ENCODE measurements at regions of chr6 and their contacts with region 1.

Region 1: GRCh38 chr6:15245361-15246216 is at the start of gene JARID2:
- DNase-seq: peak; percentile 94 to 98 (median 95)
- H3K4me3 ChIP-seq: peak within 1 kb of the TSS; percentile 75 to 96
- H3K4me3 Mint-ChIP-seq: peak within 1 kb of the TSS; percentile 98 to 100 (median 99)
- H3K27ac ChIP-seq: peak within 1 kb of the TSS; percentile 90
- H3K27ac Mint-ChIP-seq: peak within 1 kb of the TSS; percentile 96 to 99 (median 98)
- H3K4me1 ChIP-seq: peaks cover 32% of the 10 kb centered on the region
- H3K4me1 Mint-ChIP-seq: peaks cover 19 to 49% (median 29%) of the 10 kb centered on the region in 4 donors
- H3K27me3 ChIP-seq: no peaks in the 10 kb centered on the region
- H3K27me3 Mint-ChIP-seq: peaks cover 0 to 5% of the 10 kb centered on the region in 2 donors
- total RNA-seq, gene JARID2: 20.2 to 21.6 TPM

Region 2: DNA sequence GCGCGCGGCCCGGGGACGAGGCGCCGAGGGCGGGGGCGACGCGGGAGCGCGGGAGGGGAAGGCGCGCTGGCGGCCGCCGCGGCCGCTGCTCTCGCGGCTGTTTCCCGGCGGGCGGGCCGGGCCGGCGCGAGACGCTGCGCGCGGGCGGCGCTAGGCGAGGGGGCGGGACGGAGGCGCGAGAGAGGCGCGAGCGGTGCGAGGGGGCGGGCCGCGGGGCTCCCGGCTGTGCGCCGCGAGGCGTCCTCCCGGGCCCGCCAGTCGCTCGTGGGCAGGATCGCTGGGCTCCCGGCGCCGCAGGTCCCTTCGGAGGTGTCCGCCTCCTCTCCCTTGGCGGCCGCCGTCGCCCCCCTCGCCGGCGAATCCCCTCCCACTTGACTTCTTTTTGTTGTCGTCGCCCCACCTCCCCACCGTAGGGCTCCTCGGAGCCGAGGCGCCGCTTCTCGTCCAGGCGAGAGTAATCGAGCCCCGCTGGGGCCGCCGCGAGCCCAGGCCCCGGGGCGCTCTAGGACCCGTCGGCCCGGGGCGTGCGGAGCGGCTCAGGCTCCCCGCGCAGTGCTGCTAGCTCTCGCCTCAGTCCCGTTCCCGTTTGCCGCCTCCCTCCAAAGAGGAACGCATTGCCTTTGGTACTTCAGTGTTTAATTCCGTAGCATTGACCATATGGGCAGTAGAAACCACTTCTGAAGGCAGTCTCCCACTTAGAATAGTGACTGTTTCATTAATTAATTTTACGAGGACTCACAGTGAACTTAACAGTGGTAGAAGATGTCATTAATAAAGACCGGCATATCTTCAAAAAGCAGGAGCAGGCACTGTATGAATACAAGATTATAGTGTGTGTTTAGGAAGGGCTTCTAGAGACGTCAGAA is 1533.6 kb before region 1 on chr6 and contains the start of gene RANBP9:
- CTCF ChIA-PET with region 1: no interaction called
- POLR2A ChIA-PET with region 1: no interaction called
- intact Hi-C with region 1: loop called (anchors 5 kb)
- DNase-seq: peak; percentile 89 to 92 (median 91)
- H3K4me3 ChIP-seq: peak within 1 kb of the TSS; percentile 69 to 74
- H3K4me3 Mint-ChIP-seq: peak within 1 kb of the TSS; percentile 95 to 99 (median 96)
- H3K27ac ChIP-seq: peak within 1 kb of the TSS; percentile 87
- H3K27ac Mint-ChIP-seq: peak within 1 kb of the TSS; percentile 98 to 99 (median 99)
- H3K4me1 ChIP-seq: peaks cover 50% of the 10 kb centered on the region
- H3K4me1 Mint-ChIP-seq: peaks cover 28 to 73% (median 44%) of the 10 kb centered on the region in 4 donors
- H3K27me3 ChIP-seq: no peaks in the 10 kb centered on the region
- H3K27me3 Mint-ChIP-seq: no peaks in the 10 kb centered on the region
- total RNA-seq, gene RANBP9: 51.1 to 52.9 TPM

Region 3: GRCh38 chr6:14210663-14211561 is 1034.7 kb before region 1 on chr6:
- CTCF ChIA-PET with region 1: interaction called, 3 read pairs
- POLR2A ChIA-PET with region 1: no interaction called
- intact Hi-C with region 1: loop called (anchors 1 kb)
- DNase-seq: peak; percentile 87 to 93 (median 90)
- H3K4me3 ChIP-seq: peak overlapping the region; percentile 71 to 90
- H3K4me3 Mint-ChIP-seq: peak overlapping the region; percentile 86 to 92 (median 89)
- H3K27ac ChIP-seq: peak overlapping the region; percentile 45
- H3K27ac Mint-ChIP-seq: peak overlapping the region; percentile 22 to 86 (median 77)
- H3K4me1 ChIP-seq: peaks cover 9% of the 10 kb centered on the region
- H3K4me1 Mint-ChIP-seq: peaks cover 6 to 22% (median 13%) of the 10 kb centered on the region in 4 donors
- H3K27me3 ChIP-seq: no peaks in the 10 kb centered on the region
- H3K27me3 Mint-ChIP-seq: no peaks in the 10 kb centered on the region

Region 4: DNA sequence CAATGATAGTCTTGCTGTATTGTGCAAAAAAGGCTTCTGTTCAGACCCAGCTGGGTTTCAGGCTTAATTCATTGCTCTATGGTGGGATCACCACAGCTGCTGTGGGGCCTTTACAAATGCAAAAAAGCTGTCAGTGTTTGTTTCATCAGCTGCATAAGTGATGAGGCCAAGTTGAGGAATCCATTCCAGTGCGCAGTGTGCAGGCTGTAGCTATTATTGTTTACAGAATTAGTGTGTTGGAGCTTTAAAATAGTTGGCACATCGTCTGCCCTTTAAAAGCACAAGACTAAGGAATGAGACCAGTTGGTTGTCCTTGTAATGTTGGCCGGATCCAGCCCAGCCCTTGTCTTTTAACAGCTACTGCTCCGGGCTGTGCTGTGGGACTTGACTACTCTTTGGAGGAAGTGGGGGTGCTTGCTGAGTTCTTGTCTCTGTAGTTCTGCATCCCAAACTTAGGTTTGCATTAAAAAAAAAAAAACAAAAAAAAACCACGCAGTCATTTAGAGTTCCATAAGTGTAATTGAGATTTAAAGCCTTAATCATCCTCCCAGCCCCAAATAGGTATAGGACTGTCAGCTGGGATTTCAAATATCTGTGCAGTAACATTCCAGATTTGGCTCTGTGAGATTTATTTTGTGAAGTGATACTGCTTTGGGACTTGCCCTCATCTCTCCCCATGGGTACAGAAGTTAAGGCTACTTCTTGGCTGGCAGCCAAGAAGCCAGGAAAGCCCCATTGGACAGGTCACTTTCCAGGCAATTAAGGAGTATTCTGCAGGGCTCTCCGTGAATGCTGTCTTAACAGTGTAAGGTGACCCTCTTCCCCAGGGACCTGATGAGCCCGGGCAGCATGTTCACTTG is 19.5 kb after region 1 on chr6:
- CTCF ChIA-PET with region 1: interaction called, 3 read pairs
- POLR2A ChIA-PET with region 1: interaction called, 11 read pairs
- intact Hi-C with region 1: no loop called
- DNase-seq: no peak
- H3K4me3 ChIP-seq: no peak overlapping the region
- H3K4me3 Mint-ChIP-seq: peak overlapping the region in 6 of 8 donors; percentile 19 to 86 (median 66)
- H3K27ac ChIP-seq: no peak overlapping the region
- H3K27ac Mint-ChIP-seq: peak overlapping the region in 2 of 7 donors; percentile 8 to 75
- H3K4me1 ChIP-seq: peaks cover 74% of the 10 kb centered on the region
- H3K4me1 Mint-ChIP-seq: peaks cover 50 to 96% (median 78%) of the 10 kb centered on the region in 4 donors
- H3K27me3 ChIP-seq: no peaks in the 10 kb centered on the region
- H3K27me3 Mint-ChIP-seq: no peaks in the 10 kb centered on the region

Region 5: DNA sequence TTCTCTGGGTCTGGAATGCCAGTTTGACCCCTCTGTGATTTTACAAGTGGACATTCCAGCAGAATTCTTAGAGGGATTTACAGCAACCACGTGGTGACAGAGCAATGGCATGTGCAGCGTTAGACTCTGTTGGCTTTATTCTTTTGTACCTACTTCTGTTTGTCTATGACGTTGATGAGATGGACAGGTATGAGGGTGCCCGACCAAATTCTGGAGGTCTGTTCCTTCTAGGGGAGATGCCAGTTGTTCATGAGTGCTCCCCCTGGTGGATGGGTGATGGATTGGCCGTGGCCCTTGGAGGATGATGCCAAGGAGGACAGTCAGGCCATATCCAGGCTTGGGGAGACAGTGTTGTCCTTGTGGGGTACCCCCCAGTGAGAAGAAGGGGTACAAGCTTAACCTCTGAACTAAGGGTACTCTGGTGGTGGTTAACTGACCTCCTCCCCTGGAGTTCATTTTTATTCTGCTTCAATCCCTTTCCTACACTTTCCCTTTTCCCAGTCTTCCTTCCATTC is 218.7 kb after region 1 on chr6:
- CTCF ChIA-PET with region 1: no interaction called
- POLR2A ChIA-PET with region 1: no interaction called
- intact Hi-C with region 1: loop called (anchors 2 kb)
- DNase-seq: peak; percentile 34 to 56 (median 52)
- H3K4me3 ChIP-seq: no peak overlapping the region
- H3K4me3 Mint-ChIP-seq: no peak overlapping the region
- H3K27ac ChIP-seq: no peak overlapping the region
- H3K27ac Mint-ChIP-seq: no peak overlapping the region
- H3K4me1 ChIP-seq: peaks cover 13% of the 10 kb centered on the region
- H3K4me1 Mint-ChIP-seq: peaks cover 32 to 41% (median 35%) of the 10 kb centered on the region in 4 donors
- H3K27me3 ChIP-seq: no peaks in the 10 kb centered on the region
- H3K27me3 Mint-ChIP-seq: no peaks in the 10 kb centered on the region

Measured in CD4-positive, alpha-beta memory T cell (primary cell).